ENCODE measurements at regions of chr6 and their contacts with region 1.

Region 1: GRCh38 chr6:113375950-113376846 is 480.9 kb upstream of the MARCKS start:
- DNase-seq: peak; percentile 66
- H3K4me3 ChIP-seq: no peak overlapping the region
- H3K27me3 ChIP-seq: no peaks in the 10 kb centered on the region
- CTCF ChIP-seq: no peak

Region 2: DNA sequence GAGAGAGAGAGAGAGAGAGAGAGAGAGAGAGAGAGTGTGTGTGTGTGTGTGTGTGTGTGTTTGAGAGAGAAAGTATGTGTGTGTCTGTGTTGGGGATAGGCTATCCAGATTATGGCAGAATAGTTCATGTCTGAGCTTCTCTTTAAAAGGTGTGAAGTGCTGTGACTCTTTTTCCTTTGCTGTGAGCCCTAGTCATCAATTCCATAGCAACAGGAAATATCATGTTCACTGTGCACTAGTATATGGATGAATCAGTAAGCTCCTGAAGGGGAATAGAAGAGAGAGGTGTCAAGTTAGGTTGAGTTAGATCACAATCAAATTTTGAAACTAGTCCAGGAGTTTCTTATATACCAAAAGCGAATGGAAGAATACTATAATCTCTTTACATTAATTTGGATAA is 710.4 kb before region 1 on chr6:
- CTCF ChIA-PET with region 1: no interaction called
- POLR2A ChIA-PET with region 1: interaction called, 12 read pairs
- DNase-seq: peak; percentile 37
- H3K4me3 ChIP-seq: no peak overlapping the region
- H3K27me3 ChIP-seq: no peaks in the 10 kb centered on the region
- CTCF ChIP-seq: no peak

Region 3: GRCh38 chr6:113299531-113299930 is 76.7 kb before region 1 on chr6:
- CTCF ChIA-PET with region 1: no interaction called
- POLR2A ChIA-PET with region 1: no interaction called
- DNase-seq: no peak
- H3K4me3 ChIP-seq: no peak overlapping the region
- H3K27me3 ChIP-seq: no peaks in the 10 kb centered on the region
- CTCF ChIP-seq: no peak

Region 4: GRCh38 chr6:113461153-113461932 is 85.1 kb after region 1 on chr6:
- CTCF ChIA-PET with region 1: no interaction called
- POLR2A ChIA-PET with region 1: no interaction called
- DNase-seq: no peak
- H3K4me3 ChIP-seq: no peak overlapping the region
- H3K27me3 ChIP-seq: no peaks in the 10 kb centered on the region
- CTCF ChIP-seq: peak; percentile 22; the same call in 1 of the 2 replicates

Region 5: GRCh38 chr6:113495506-113495905 is 119.3 kb after region 1 on chr6:
- CTCF ChIA-PET with region 1: no interaction called
- POLR2A ChIA-PET with region 1: no interaction called
- DNase-seq: peak; percentile 33
- H3K4me3 ChIP-seq: no peak overlapping the region
- H3K27me3 ChIP-seq: no peaks in the 10 kb centered on the region
- CTCF ChIP-seq: no peak

Region 6: GRCh38 chr6:114432380-114432779 is 1056.2 kb after region 1 on chr6:
- CTCF ChIA-PET with region 1: no interaction called
- POLR2A ChIA-PET with region 1: no interaction called
- DNase-seq: no peak
- H3K4me3 ChIP-seq: no peak overlapping the region
- H3K27me3 ChIP-seq: no peaks in the 10 kb centered on the region
- CTCF ChIP-seq: no peak